H1 (cell line): ENCODE measurements at regions of chr2 and their contacts with region 1.

Region 1: DNA sequence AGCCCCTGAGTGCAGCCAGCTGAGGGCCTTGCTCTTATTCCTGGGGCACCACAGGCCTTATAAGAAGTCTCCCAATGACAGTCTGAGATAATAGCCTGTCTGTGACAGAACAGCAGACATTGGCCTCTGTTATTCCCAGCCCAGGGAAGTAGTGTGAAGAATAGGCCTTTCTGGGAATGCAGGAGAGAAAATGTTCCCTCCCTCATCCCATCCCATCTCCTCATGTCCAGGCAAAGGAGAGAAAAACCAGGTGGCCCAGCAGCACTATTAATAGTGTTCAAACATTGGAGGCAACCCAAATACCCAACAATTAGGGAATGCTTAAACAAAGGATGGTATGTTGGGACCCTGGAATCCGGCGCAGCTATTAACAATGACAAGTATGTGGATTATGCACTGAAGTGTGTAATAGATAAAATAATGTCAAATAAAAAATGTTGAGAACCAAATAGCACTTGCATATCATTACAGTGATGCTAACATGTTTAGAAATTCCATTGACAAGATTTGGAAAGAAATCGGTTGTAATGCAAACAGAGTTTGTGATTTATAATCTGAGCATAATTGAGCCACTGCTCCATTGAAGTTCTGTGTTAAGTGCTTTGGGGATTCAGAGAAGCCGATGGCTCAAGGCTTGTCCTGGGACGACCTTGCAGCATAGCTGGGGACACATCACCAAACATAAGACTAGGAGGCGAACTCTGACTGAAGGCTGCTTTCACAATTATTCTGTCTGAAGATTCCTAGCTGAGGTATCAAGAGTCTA is 69.3 kb downstream of the LBH start:
- DNase-seq: no peak
- H3K4me3 ChIP-seq: no peak overlapping the region
- H3K27ac ChIP-seq: no peak overlapping the region
- H3K4me1 ChIP-seq: peaks cover 8 to 29% (median 10%) of the 10 kb centered on the region in 4 experiments
- H3K27me3 ChIP-seq: peaks cover 0 to 7% (median 4%) of the 10 kb centered on the region in 4 experiments; a peak in 4 of 7 replicates
- CTCF ChIP-seq: no peak
- EP300 ChIP-seq: no peak
- POLR2A ChIP-seq: no peak
- RAD21 ChIP-seq: no peak

Region 2: DNA sequence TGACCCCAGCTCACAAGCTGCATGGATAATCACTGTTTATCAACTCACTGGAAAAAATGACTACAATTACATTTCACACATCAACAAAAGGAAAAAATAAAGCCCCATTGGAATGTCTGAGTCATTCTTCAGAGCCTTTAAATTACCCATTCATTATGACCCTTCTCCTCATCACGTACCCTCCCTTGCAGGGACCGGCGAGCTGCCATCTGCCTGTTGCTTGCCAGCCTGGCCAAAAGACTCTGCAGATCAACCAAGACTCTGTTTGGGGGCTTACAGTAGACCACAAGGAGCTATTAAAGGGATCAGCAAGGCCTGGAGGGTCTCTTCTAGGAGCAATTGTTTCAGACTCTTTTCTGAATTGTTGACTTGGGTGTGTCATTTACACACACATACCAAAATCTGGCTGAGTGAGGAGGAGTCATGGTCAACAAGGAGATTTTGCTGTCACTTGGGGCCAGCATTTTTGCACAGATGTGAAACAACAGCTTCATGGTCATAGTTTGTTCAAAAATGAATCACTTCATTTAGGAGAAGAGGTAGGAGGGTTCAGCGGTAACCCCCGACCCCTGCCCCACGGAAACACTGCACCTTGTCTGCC is 27.3 kb before region 1 on chr2:
- CTCF ChIA-PET with region 1: no interaction called
- POLR2A ChIA-PET with region 1: no interaction called
- DNase-seq: no peak
- H3K4me3 ChIP-seq: no peak overlapping the region
- H3K27ac ChIP-seq: no peak overlapping the region
- H3K4me1 ChIP-seq: 0 out of 7 replicates have a peak, but pooled peaks cover 0 to 3% (median 0%) of the 10 kb centered on the region in 4 experiments
- H3K27me3 ChIP-seq: no peaks in the 10 kb centered on the region
- CTCF ChIP-seq: no peak
- EP300 ChIP-seq: no peak
- POLR2A ChIP-seq: no peak
- RAD21 ChIP-seq: no peak

Region 3: GRCh38 chr2:30287857-30288513 is 12.7 kb before region 1 on chr2:
- CTCF ChIA-PET with region 1: interaction called, 32 read pairs
- POLR2A ChIA-PET with region 1: interaction called, 4 read pairs
- DNase-seq: no peak
- H3K4me3 ChIP-seq: no peak overlapping the region
- H3K27ac ChIP-seq: no peak overlapping the region
- H3K4me1 ChIP-seq: peaks cover 2 to 12% (median 3%) of the 10 kb centered on the region in 4 experiments; a peak in 5 of 7 replicates
- H3K27me3 ChIP-seq: no peaks in the 10 kb centered on the region; a peak in 2 of 7 replicates
- CTCF ChIP-seq: no peak
- EP300 ChIP-seq: no peak
- POLR2A ChIP-seq: no peak
- RAD21 ChIP-seq: no peak

Region 4: GRCh38 chr2:30447149-30448045 is 146.8 kb after region 1 on chr2 and contains the start of gene LCLAT1:
- CTCF ChIA-PET with region 1: no interaction called
- POLR2A ChIA-PET with region 1: no interaction called
- DNase-seq: peak in 1 of 2 experiments; percentile 90
- H3K4me3 ChIP-seq: peak within 1 kb of the TSS; percentile 74 to 82 (median 79)
- H3K27ac ChIP-seq: peak within 1 kb of the TSS; percentile 79; the same call in 1 of the 2 replicates
- H3K4me1 ChIP-seq: peaks cover 0 to 5% (median 3%) of the 10 kb centered on the region in 4 experiments; a peak in 5 of 7 replicates
- H3K27me3 ChIP-seq: peaks cover 0 to 5% (median under 1%) of the 10 kb centered on the region in 4 experiments; a peak in 3 of 7 replicates
- CTCF ChIP-seq: peak in 2 of 3 experiments; percentile 13 to 15; a peak in 2 of 4 replicates
- EP300 ChIP-seq: no peak
- POLR2A ChIP-seq: peak in 1 of 2 experiments; percentile 69; a peak in 2 of 3 replicates
- RAD21 ChIP-seq: peak in 1 of 2 experiments; percentile 3; a peak in 1 of 4 replicates
- total RNA-seq, gene LCLAT1: 20.4 and 22.0 TPM in 2 replicates